Naive thymus-derived CD4-positive, alpha-beta T cell (primary cell): ENCODE measurements at regions of chr2 and their contacts with region 1.

Region 1: DNA sequence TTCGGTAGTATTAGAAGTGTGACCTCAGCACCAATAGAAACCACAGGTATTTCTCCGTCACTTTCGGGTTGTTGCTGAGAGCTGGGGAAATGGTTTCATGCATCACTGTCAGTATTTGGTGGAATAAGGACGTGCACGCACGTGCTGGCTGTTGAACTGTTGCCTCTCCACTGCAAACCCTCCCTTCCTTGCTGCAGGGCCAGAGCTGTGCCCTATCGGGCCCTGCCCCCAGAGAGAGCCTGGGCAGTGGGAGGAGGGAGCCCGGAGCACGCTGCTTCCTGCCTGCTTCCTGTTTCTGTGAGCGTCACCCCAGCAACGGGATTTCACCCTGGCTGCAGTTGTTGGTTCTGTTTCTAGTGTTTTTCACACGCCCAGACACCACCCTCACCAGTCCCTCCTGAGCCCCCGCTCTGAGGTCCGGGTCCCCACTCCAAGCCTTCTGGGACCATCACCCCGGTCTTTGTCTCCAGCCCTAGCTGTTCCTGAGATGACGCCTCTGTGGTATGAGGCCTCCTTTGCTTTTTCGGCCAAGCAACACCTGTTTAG is 47.4 kb downstream of the LRRFIP1 start:
- DNase-seq: peak; percentile 71 to 92 (median 88)
- ATAC-seq: peak; percentile 77
- H3K4me3 ChIP-seq: peak overlapping the region; percentile 66
- H3K4me3 Mint-ChIP-seq: peak overlapping the region; percentile 84 to 97 (median 90)
- H3K27ac ChIP-seq: peak overlapping the region; percentile 99
- H3K27ac Mint-ChIP-seq: peak overlapping the region; percentile 94 to 100 (median 99)
- H3K4me1 ChIP-seq: peaks cover 30 to 38% of the 10 kb centered on the region in 2 donors
- H3K4me1 Mint-ChIP-seq: peaks cover 37 to 62% (median 57%) of the 10 kb centered on the region in 7 donors
- H3K27me3 ChIP-seq: no peaks in the 10 kb centered on the region
- H3K27me3 Mint-ChIP-seq: peaks cover 0 to 6% (median 0%) of the 10 kb centered on the region in 5 donors

Region 2: DNA sequence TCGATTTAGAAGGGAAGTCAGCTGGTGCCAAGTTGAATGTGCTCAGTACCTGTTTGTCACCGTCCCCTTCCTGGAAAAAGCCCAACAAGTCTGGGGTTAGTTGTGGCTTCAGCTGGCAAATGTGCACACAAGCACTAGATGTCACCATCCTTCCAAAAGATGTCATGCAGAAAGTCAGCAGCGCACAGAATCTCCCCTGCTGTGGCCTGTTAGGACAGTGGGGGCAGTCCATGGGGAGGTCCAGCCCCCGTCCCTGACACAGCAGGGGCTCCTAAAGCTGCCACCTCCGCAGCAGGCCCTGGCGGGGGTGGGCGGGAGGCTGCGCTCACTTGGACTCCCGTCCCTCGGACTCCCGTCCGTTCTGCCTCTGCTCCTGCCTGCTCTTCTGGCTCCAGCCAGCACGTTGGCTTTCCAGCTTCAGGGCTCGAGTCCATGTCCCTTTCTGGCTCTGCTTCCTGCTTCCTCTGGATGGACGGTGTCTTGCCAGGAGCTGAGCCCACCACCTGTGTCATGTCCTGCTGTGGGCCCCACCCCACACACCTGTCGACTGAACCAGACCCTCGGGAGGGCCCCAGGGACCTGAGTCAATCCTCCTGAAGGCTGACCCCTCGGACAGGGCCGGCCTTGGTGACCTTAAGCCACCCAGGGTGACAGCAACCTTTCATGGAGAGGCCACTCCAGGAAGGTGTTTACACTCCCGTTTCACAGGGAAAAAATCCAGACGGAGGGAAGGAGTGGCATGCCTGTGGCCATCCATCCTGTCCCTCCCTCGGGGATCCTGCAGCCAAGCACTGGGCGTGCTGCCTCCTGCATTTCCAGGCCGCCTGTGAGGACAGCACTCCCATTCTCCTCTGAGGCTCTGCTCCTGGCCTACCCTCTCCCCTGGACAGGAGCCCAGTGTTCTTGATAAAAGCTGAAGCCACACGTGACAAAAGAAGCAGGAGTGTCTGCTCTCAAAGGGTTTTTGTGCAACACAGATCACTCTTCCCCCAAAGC is 92.8 kb before region 1 on chr2:
- CTCF ChIA-PET with region 1: interaction called, 7 read pairs
- POLR2A ChIA-PET with region 1: no interaction called
- intact Hi-C with region 1: loop called (anchors 1 kb)
- DNase-seq: peak in 7 of 9 donors; percentile 53 to 73 (median 62)
- ATAC-seq: peak; percentile 80
- H3K4me3 ChIP-seq: no peak overlapping the region
- H3K4me3 Mint-ChIP-seq: peak overlapping the region in 1 of 10 donors; percentile 9
- H3K27ac ChIP-seq: no peak overlapping the region
- H3K27ac Mint-ChIP-seq: peak overlapping the region in 6 of 9 donors; percentile 14 to 84 (median 56)
- H3K4me1 ChIP-seq: no peaks in the 10 kb centered on the region
- H3K4me1 Mint-ChIP-seq: peaks cover 0 to 6% (median 4%) of the 10 kb centered on the region in 7 donors
- H3K27me3 ChIP-seq: no peaks in the 10 kb centered on the region
- H3K27me3 Mint-ChIP-seq: peaks cover 0 to 3% (median 0%) of the 10 kb centered on the region in 5 donors

Region 3: GRCh38 chr2:237691908-237692600 is 17.2 kb after region 1 on chr2:
- CTCF ChIA-PET with region 1: interaction called, 111 read pairs
- POLR2A ChIA-PET with region 1: interaction called, 349 read pairs
- intact Hi-C with region 1: loop called (anchors 1 kb)
- DNase-seq: peak; percentile 84 to 97 (median 90)
- ATAC-seq: peak; percentile 75
- H3K4me3 ChIP-seq: peak overlapping the region; percentile 82
- H3K4me3 Mint-ChIP-seq: peak overlapping the region; percentile 86 to 98 (median 92)
- H3K27ac ChIP-seq: peak overlapping the region; percentile 97
- H3K27ac Mint-ChIP-seq: peak overlapping the region; percentile 89 to 98 (median 94)
- H3K4me1 ChIP-seq: peaks cover 61 to 63% of the 10 kb centered on the region in 2 donors
- H3K4me1 Mint-ChIP-seq: peaks cover 59 to 86% (median 74%) of the 10 kb centered on the region in 7 donors
- H3K27me3 ChIP-seq: no peaks in the 10 kb centered on the region
- H3K27me3 Mint-ChIP-seq: no peaks in the 10 kb centered on the region

Region 4: DNA sequence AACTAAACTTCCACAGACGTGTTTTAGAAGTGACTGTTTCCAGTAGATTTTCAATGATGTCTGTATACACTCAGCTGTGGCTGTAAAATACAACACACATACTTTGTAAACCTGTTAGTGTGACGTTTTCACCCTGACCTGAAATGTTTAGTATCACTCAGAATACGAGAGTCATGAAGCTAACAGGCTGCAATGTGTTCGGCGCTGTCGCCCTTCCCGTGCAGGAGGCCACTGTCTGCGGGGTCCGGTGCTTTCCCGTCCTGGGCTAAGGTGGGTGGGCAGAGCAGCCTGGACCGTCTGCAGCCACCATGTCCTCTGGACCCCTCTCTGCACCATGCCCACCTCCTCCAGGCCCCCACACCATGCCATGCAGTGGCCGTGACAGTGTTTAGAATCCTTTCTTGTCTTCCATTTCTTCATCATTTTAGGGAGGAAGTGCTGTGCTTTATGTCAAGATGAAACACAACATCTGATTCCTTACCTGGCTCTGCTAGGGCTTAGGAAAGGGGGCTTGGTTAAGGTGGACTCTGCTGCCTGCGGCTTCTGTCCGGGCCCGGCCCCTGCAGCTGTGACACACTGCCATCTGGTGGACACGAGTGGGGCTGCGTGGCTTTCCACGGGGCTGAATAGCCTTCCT is 69.9 kb after region 1 on chr2:
- CTCF ChIA-PET with region 1: interaction called, 181 read pairs
- POLR2A ChIA-PET with region 1: interaction called, 32 read pairs
- intact Hi-C with region 1: loop called (anchors 1 kb)
- DNase-seq: peak; percentile 61 to 84 (median 74)
- ATAC-seq: peak; percentile 83
- H3K4me3 ChIP-seq: no peak overlapping the region
- H3K4me3 Mint-ChIP-seq: peak overlapping the region in 1 of 10 donors; percentile 14
- H3K27ac ChIP-seq: peak overlapping the region; percentile 44
- H3K27ac Mint-ChIP-seq: peak overlapping the region; percentile 79 to 94 (median 86)
- H3K4me1 ChIP-seq: peaks cover 4 to 8% of the 10 kb centered on the region in 2 donors
- H3K4me1 Mint-ChIP-seq: peaks cover 30 to 55% (median 46%) of the 10 kb centered on the region in 7 donors
- H3K27me3 ChIP-seq: no peaks in the 10 kb centered on the region
- H3K27me3 Mint-ChIP-seq: no peaks in the 10 kb centered on the region

Region 5: GRCh38 chr2:237818066-237818473 is 143.3 kb after region 1 on chr2:
- CTCF ChIA-PET with region 1: no interaction called
- POLR2A ChIA-PET with region 1: no interaction called
- intact Hi-C with region 1: no loop called
- DNase-seq: no peak
- ATAC-seq: peak; percentile 48
- H3K4me3 ChIP-seq: no peak overlapping the region
- H3K4me3 Mint-ChIP-seq: no peak overlapping the region
- H3K27ac ChIP-seq: no peak overlapping the region
- H3K27ac Mint-ChIP-seq: no peak overlapping the region
- H3K4me1 ChIP-seq: no peaks in the 10 kb centered on the region
- H3K4me1 Mint-ChIP-seq: peaks cover 0 to 13% (median 9%) of the 10 kb centered on the region in 7 donors
- H3K27me3 ChIP-seq: no peaks in the 10 kb centered on the region
- H3K27me3 Mint-ChIP-seq: peaks cover 0 to 4% (median 0%) of the 10 kb centered on the region in 5 donors

Region 6: GRCh38 chr2:238263204-238264071 is 588.6 kb after region 1 on chr2:
- CTCF ChIA-PET with region 1: interaction called, 3 read pairs
- POLR2A ChIA-PET with region 1: no interaction called
- intact Hi-C with region 1: loop called (anchors 1 kb)
- DNase-seq: peak; percentile 55 to 71 (median 67)
- ATAC-seq: peak; percentile 75
- H3K4me3 ChIP-seq: no peak overlapping the region
- H3K4me3 Mint-ChIP-seq: no peak overlapping the region
- H3K27ac ChIP-seq: no peak overlapping the region
- H3K27ac Mint-ChIP-seq: peak overlapping the region in 3 of 9 donors; percentile 57 to 80 (median 68)
- H3K4me1 ChIP-seq: no peaks in the 10 kb centered on the region
- H3K4me1 Mint-ChIP-seq: peaks cover 4 to 23% (median 6%) of the 10 kb centered on the region in 7 donors
- H3K27me3 ChIP-seq: no peaks in the 10 kb centered on the region
- H3K27me3 Mint-ChIP-seq: no peaks in the 10 kb centered on the region